PC-9 (cell line): ENCODE measurements at regions of chr4 and their contacts with region 1.

Region 1: DNA sequence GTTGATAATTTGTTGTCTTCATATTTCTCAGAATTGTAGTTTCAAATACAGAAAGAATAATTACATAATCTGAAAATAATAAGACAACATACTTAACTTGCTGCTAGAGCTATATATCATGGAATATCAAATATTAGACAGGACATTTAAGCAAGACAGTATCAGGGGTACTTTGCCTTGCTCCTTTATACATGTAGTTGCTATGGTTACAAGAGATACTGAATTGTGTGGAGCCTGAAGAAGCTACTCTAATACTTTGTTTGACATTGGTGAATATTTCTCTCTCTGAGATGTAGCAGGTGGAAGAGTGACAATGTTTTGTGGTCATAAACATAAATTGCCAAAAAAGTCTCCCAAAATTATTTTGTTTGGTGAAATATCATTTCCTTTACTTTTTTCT is 1736.8 kb downstream of the STIM2 start:
- DNase-seq: no peak
- H3K4me3 ChIP-seq: no peak overlapping the region
- H3K27ac ChIP-seq: no peak overlapping the region
- H3K4me1 ChIP-seq: no peaks in the 10 kb centered on the region
- H3K27me3 ChIP-seq: no peaks in the 10 kb centered on the region
- CTCF ChIP-seq: no peak

Region 2: GRCh38 chr4:27873596-27873995 is 723.8 kb before region 1 on chr4:
- CTCF ChIA-PET with region 1: no interaction called
- POLR2A ChIA-PET with region 1: no interaction called
- intact Hi-C with region 1: loop called (anchors 10 kb)
- DNase-seq: no peak
- H3K4me3 ChIP-seq: no peak overlapping the region
- H3K27ac ChIP-seq: no peak overlapping the region
- H3K4me1 ChIP-seq: no peaks in the 10 kb centered on the region
- H3K27me3 ChIP-seq: no peaks in the 10 kb centered on the region
- CTCF ChIP-seq: no peak

Region 3: GRCh38 chr4:28388455-28388854 is 209.0 kb before region 1 on chr4:
- CTCF ChIA-PET with region 1: no interaction called
- POLR2A ChIA-PET with region 1: no interaction called
- intact Hi-C with region 1: no loop called
- DNase-seq: no peak
- H3K4me3 ChIP-seq: no peak overlapping the region
- H3K27ac ChIP-seq: no peak overlapping the region
- H3K4me1 ChIP-seq: no peaks in the 10 kb centered on the region
- H3K27me3 ChIP-seq: no peaks in the 10 kb centered on the region
- CTCF ChIP-seq: no peak

Region 4: DNA sequence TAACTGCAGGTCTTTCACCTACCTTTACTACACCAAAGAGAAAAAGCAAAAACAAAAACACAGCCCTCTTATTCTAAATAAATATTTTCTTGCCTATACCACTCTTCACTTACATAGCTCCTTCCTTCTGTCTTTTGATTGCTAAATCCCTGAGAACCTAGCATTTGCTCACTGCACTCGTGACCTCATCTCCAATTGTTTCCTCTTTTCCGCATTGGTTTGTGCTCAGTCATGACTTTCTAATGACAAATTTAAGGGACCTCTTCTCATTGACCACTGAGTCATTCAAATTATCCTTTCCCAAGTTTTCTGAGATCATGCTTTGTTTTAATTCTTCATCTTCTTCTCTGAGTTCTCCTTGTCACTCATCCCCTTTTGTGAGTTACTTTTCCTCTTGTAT is 39.7 kb before region 1 on chr4:
- CTCF ChIA-PET with region 1: no interaction called
- POLR2A ChIA-PET with region 1: no interaction called
- intact Hi-C with region 1: no loop called
- DNase-seq: no peak
- H3K4me3 ChIP-seq: no peak overlapping the region
- H3K27ac ChIP-seq: no peak overlapping the region
- H3K4me1 ChIP-seq: no peaks in the 10 kb centered on the region
- H3K27me3 ChIP-seq: no peaks in the 10 kb centered on the region
- CTCF ChIP-seq: no peak